Body of pancreas (tissue), 4 donors: ENCODE measurements at regions of chr2 and their contacts with region 1.

Region 1: GRCh38 chr2:164992818-164993217 is 37.5 kb upstream of the SLC38A11 start:
- DNase-seq: peak; percentile 71 to 80 (median 76)
- ATAC-seq: peak; percentile 90
- H3K4me3 ChIP-seq: no peak overlapping the region
- H3K27ac ChIP-seq: no peak overlapping the region
- H3K4me1 ChIP-seq: peaks cover 5% of the 10 kb centered on the region
- H3K27me3 ChIP-seq: no peaks in the 10 kb centered on the region
- CTCF ChIP-seq: peak; percentile 14 to 75 (median 48)
- POLR2A ChIP-seq: no peak

Region 2: GRCh38 chr2:165293440-165294353 is 300.9 kb after region 1 on chr2:
- intact Hi-C with region 1: loop called (anchors 10 kb)
- DNase-seq: peak; percentile 46 to 81 (median 60)
- ATAC-seq: peak; percentile 100
- H3K4me3 ChIP-seq: no peak overlapping the region
- H3K27ac ChIP-seq: no peak overlapping the region
- H3K4me1 ChIP-seq: peaks cover 6% of the 10 kb centered on the region
- H3K27me3 ChIP-seq: no peaks in the 10 kb centered on the region
- CTCF ChIP-seq: peak; percentile 57 to 94 (median 75)
- POLR2A ChIP-seq: no peak